Stomach (tissue), 19 donors: ENCODE measurements at regions of chr10 and their contacts with region 1.

Region 1: DNA sequence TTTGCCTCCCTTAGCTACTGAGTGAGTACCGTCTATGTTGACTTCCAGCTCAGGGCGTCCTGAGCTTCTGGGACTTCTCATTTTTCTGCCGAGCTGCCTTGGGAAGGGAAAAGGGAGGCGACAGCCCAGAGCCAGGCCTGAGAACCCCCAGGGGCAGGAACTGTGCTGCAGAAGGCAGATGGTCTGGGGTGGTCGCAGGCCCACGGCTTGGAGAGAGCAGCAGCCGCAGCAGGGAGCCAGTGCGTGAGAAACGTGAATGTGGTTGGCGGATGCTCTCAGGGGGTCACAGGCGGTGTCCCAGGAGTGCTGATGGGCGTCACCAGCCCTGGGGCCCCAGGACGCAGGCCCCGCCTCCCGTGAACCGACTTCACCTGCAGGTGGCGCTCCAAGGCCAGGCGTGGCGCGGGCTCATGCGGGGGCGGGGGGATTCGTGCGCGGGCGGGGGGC is 9.2 kb upstream of the PWWP2B start:
- DNase-seq: peak; percentile 83 to 92
- H3K4me3 ChIP-seq: peak overlapping the region in 1 of 4 donors; percentile 17
- H3K27ac ChIP-seq: peak overlapping the region in 2 of 5 donors; percentile 28 to 54
- H3K4me1 ChIP-seq: peaks cover 10 to 19% (median 18%) of the 10 kb centered on the region in 4 donors
- H3K27me3 ChIP-seq: no peaks in the 10 kb centered on the region
- CTCF ChIP-seq: peak in 5 of 7 experiments; percentile 45 to 77 (median 62)
- EP300 ChIP-seq: no peak
- POLR2A ChIP-seq: no peak

Region 2: DNA sequence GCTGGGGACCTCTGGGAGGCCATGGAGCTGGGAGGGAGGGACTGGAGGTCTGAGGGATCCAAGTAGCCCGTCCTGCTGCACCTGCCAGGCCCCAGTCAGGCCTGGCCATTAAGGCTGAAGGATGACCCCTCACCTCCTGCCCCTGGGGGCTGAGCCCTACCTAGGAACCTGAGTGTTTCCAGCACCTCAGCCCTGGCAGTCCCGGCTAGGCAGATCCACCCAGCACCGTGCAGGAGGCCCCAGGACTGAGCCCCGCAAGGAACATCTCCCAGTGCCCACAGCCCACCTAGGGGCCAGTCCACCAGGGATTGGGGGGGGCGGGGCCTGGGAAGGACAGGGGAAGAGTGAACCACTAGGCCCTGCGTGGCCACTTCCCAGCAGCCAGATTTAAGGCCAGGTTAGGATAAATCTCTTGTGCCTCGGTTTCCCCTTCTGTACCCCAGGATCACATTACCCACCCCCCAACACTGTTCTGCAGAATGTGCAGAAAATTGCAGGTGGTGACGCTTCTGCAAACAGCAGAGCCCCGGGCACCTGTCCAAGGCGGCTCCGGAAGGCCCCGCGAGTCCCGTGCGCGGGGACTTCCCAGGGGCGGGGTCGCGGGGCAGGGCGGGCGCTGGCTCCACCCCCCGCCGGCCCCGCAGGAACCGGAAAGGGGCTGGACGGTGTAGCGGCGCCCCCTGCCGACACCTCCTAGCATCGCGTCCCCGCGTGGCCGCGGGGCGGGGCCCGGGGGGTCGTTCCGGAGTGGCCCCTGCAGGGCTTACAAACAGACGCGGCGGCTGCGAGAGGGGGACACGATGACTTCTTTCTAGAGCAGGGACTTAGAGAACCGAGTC is 65.1 kb after region 1 on chr10:
- intact Hi-C with region 1: loop called (anchors 5 kb)
- DNase-seq: peak; percentile 95 to 96
- H3K4me3 ChIP-seq: peak overlapping the region; percentile 3 to 31 (median 22)
- H3K27ac ChIP-seq: peak overlapping the region; percentile 62 to 72 (median 69)
- H3K4me1 ChIP-seq: peaks cover 25 to 69% (median 49%) of the 10 kb centered on the region in 4 donors
- H3K27me3 ChIP-seq: peaks cover 0 to 4% (median 0%) of the 10 kb centered on the region in 3 donors
- CTCF ChIP-seq: peak in 5 of 7 experiments; percentile 94 to 99 (median 95)
- EP300 ChIP-seq: no peak
- POLR2A ChIP-seq: no peak

Region 3: GRCh38 chr10:132643709-132644526 is 256.1 kb after region 1 on chr10:
- intact Hi-C with region 1: loop called (anchors 10 kb)
- DNase-seq: peak in 1 of 2 donors; percentile 29
- H3K4me3 ChIP-seq: no peak overlapping the region
- H3K27ac ChIP-seq: no peak overlapping the region
- H3K4me1 ChIP-seq: peaks cover 0 to 64% (median 26%) of the 10 kb centered on the region in 4 donors
- H3K27me3 ChIP-seq: no peaks in the 10 kb centered on the region
- CTCF ChIP-seq: no peak
- EP300 ChIP-seq: no peak
- POLR2A ChIP-seq: no peak